ENCODE measurements at regions of chr3 and their contacts with region 1.

Region 1: DNA sequence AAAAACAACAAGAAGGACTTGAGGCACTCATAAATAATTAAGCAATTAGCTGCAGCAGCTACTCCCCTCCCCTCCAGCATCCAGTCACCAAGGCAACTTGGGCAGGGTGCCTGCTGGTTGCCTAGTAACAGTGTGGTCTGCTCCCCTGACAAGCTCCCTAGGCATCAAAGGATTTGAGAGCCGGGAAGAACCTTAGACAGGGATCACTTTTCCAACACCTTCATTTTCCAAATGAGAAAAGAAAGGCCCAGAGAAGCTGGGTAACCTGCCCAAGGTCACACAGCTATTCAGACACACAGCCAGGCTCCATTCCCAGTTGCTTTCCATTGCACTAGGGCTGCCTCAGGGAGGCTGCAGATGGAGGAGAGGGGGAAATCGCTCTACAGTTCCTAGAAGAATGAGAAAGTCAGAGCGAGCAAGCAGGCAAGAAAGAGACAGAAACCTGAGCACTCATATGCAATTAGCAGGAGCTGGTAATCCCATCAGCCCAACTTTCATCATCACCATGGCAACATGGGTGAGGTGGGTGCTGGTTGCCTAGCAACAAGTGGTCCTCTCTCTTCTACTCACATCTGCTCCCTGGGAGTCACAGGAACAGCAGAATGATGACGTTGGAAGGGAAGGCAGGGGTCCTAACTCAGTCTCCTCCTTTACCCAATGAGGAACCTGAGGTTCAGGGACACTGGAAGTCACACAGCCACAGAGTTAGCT is 3.6 kb upstream of the EIF4E3 start:
- DNase-seq: peak in 3 of 5 donors; percentile 27 to 77 (median 51)
- H3K4me3 ChIP-seq: peak overlapping the region; percentile 2
- H3K4me3 Mint-ChIP-seq: peak overlapping the region in 2 of 7 donors; percentile 7 to 60
- H3K27ac ChIP-seq: peak overlapping the region; percentile 12
- H3K27ac Mint-ChIP-seq: peak overlapping the region in 7 of 8 donors; percentile 12 to 94 (median 81)
- H3K4me1 ChIP-seq: peaks cover 36% of the 10 kb centered on the region
- H3K4me1 Mint-ChIP-seq: peaks cover 49 to 58% (median 55%) of the 10 kb centered on the region in 3 donors
- H3K27me3 ChIP-seq: no peaks in the 10 kb centered on the region
- H3K27me3 Mint-ChIP-seq: peaks cover 0 to 1% of the 10 kb centered on the region in 2 donors

Region 2: DNA sequence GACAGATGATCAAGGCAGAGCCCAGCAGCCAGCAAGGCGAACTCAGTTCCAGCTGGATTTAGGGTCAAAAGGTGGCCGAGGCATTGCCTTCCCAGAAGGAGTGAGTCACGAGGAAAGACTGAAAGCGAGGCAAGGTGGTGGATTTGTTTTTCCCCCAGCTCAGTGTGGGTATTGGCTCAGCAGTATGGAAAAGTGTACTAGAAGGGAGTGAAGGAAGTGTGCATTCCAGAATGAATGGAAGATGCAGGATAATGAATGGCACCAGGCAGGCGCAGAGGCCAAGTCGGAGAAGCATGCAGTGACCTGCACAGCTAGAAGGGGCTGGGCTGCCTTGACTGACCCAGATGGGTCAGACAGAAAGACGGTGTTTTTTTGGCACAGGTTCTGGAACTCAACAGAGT is 191.6 kb before region 1 on chr3:
- CTCF ChIA-PET with region 1: no interaction called
- POLR2A ChIA-PET with region 1: no interaction called
- DNase-seq: no peak
- H3K4me3 ChIP-seq: no peak overlapping the region
- H3K4me3 Mint-ChIP-seq: no peak overlapping the region
- H3K27ac ChIP-seq: no peak overlapping the region
- H3K27ac Mint-ChIP-seq: no peak overlapping the region
- H3K4me1 ChIP-seq: no peaks in the 10 kb centered on the region
- H3K4me1 Mint-ChIP-seq: peaks cover 0 to 1% (median 0%) of the 10 kb centered on the region in 3 donors
- H3K27me3 ChIP-seq: no peaks in the 10 kb centered on the region
- H3K27me3 Mint-ChIP-seq: no peaks in the 10 kb centered on the region

Region 3: GRCh38 chr3:71599416-71599815 is 129.4 kb before region 1 on chr3:
- CTCF ChIA-PET with region 1: no interaction called
- POLR2A ChIA-PET with region 1: no interaction called
- DNase-seq: no peak
- H3K4me3 ChIP-seq: no peak overlapping the region
- H3K4me3 Mint-ChIP-seq: no peak overlapping the region
- H3K27ac ChIP-seq: no peak overlapping the region
- H3K27ac Mint-ChIP-seq: no peak overlapping the region
- H3K4me1 ChIP-seq: no peaks in the 10 kb centered on the region
- H3K4me1 Mint-ChIP-seq: peaks cover 6 to 8% (median 7%) of the 10 kb centered on the region in 3 donors
- H3K27me3 ChIP-seq: no peaks in the 10 kb centered on the region
- H3K27me3 Mint-ChIP-seq: no peaks in the 10 kb centered on the region

Region 4: GRCh38 chr3:71672340-71672739 is 56.4 kb before region 1 on chr3:
- CTCF ChIA-PET with region 1: no interaction called
- POLR2A ChIA-PET with region 1: no interaction called
- DNase-seq: no peak
- H3K4me3 ChIP-seq: no peak overlapping the region
- H3K4me3 Mint-ChIP-seq: no peak overlapping the region
- H3K27ac ChIP-seq: no peak overlapping the region
- H3K27ac Mint-ChIP-seq: no peak overlapping the region
- H3K4me1 ChIP-seq: no peaks in the 10 kb centered on the region
- H3K4me1 Mint-ChIP-seq: peaks cover 2 to 21% (median 9%) of the 10 kb centered on the region in 3 donors
- H3K27me3 ChIP-seq: no peaks in the 10 kb centered on the region
- H3K27me3 Mint-ChIP-seq: no peaks in the 10 kb centered on the region

Region 5: GRCh38 chr3:71859123-71859519 is 130.3 kb after region 1 on chr3:
- CTCF ChIA-PET with region 1: interaction called, 22 read pairs
- POLR2A ChIA-PET with region 1: no interaction called
- DNase-seq: peak in 3 of 5 donors; percentile 6 to 49 (median 27)
- H3K4me3 ChIP-seq: no peak overlapping the region
- H3K4me3 Mint-ChIP-seq: no peak overlapping the region
- H3K27ac ChIP-seq: no peak overlapping the region
- H3K27ac Mint-ChIP-seq: peak overlapping the region in 1 of 8 donors; percentile 21
- H3K4me1 ChIP-seq: no peaks in the 10 kb centered on the region
- H3K4me1 Mint-ChIP-seq: peaks cover 10 to 12% (median 11%) of the 10 kb centered on the region in 3 donors
- H3K27me3 ChIP-seq: no peaks in the 10 kb centered on the region
- H3K27me3 Mint-ChIP-seq: peaks cover 23 to 40% of the 10 kb centered on the region in 2 donors

Measured in CD8-positive, alpha-beta memory T cell (primary cell).